ENCODE measurements at regions of chr7 and their contacts with region 1.

Region 1: DNA sequence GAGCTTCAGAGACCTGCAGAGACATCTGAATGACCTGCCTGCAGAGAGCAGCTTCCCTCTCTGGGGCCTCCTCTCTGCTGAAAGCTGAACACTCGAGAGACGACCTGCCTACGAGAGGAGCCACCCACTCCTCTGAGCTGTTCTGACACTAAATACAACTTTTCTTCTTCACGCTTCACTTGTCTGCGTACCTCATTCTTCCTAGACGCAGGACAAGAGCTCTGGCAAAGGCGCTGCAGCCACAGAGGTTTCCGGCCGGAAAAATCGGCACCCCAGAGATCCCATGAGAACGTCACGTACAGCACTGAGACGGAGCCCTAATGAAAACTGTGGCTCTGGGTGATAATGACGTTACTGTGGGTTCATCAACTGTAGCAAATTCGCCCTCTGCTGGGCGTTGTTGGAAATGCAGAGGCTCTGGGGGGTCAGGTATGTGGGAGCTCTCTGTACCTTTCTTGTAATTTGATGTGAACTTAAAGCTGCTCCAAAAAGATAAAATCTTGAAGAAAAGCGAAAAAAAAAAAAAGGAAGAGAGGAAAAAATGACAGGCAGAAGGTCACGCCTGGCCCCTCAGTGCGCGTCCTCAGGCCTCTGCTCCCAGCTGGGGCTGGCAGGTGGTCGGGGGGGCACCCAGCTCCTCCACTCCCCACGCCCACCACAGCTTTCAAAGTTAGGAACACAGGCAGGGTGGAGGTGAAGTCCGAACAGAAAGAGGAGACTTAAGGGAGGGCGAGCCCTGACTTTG is 120.7 kb downstream of the DYNC2I1 start:
- DNase-seq: peak; percentile 82 to 88 (median 85)
- H3K4me3 ChIP-seq: peak overlapping the region; percentile 63 to 71
- H3K4me3 Mint-ChIP-seq: peak overlapping the region; percentile 86 to 99 (median 90)
- H3K27ac ChIP-seq: peak overlapping the region; percentile 36
- H3K27ac Mint-ChIP-seq: peak overlapping the region; percentile 81 to 95 (median 90)
- H3K4me1 ChIP-seq: peaks cover 21% of the 10 kb centered on the region
- H3K4me1 Mint-ChIP-seq: peaks cover 11 to 24% (median 19%) of the 10 kb centered on the region in 4 donors
- H3K27me3 ChIP-seq: no peaks in the 10 kb centered on the region
- H3K27me3 Mint-ChIP-seq: no peaks in the 10 kb centered on the region

Region 2: DNA sequence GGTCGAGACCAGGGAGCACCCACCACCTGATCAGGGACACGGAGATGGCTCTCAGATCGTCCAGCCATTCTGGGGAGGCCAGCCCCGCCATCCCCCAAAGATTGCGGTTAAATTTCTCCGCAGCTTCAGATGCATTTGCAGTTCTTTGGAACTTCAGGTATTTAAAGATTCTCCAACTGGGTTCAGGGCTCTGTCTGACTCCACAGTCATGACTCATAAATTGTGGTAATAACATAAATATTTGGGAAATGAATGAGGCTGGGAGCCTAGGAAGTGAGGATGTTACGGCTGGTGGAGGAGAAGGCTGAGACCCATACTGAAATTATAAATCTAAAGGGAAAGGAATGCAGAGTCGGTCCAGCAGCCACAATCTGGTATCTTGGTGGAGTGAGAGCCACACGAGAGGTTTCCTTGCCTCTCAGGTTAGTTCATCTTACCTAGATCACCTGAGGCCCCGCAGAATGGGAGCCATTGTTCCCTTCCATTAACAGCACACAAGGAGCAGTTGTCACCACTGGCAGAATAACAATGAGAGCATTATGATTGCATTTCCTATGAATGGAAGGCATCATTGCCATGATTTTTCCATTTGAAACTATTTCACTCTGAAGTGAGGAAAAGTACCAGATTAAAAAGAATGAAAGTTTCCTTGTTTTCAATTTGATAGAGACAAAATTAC is 1666.9 kb before region 1 on chr7:
- CTCF ChIA-PET with region 1: no interaction called
- POLR2A ChIA-PET with region 1: no interaction called
- intact Hi-C with region 1: no loop called
- DNase-seq: no peak
- H3K4me3 ChIP-seq: no peak overlapping the region
- H3K4me3 Mint-ChIP-seq: no peak overlapping the region
- H3K27ac ChIP-seq: no peak overlapping the region
- H3K27ac Mint-ChIP-seq: peak overlapping the region in 1 of 7 donors; percentile 37
- H3K4me1 ChIP-seq: no peaks in the 10 kb centered on the region
- H3K4me1 Mint-ChIP-seq: peaks cover 5 to 6% (median 5%) of the 10 kb centered on the region in 4 donors
- H3K27me3 ChIP-seq: no peaks in the 10 kb centered on the region
- H3K27me3 Mint-ChIP-seq: no peaks in the 10 kb centered on the region

Region 3: DNA sequence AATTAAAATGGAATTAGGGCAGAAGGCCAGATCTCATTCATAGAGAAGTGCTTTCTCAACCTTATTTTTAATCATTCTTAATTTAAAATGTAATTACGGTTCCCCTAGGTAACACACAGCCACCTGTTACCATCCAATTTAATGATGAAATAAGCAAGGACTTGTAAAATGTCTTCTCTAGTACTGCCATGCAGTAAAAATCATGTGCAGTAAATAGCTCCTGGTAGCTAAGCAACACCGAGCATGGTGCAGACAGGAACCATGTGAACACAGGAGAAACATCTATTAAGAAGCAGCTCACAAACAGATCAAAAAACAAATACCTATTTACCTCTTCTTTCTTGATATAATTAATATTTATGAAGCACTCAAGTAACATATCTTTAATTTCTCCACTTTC is 287.5 kb before region 1 on chr7:
- CTCF ChIA-PET with region 1: interaction called, 154 read pairs
- POLR2A ChIA-PET with region 1: no interaction called
- intact Hi-C with region 1: no loop called
- DNase-seq: no peak
- H3K4me3 ChIP-seq: no peak overlapping the region
- H3K4me3 Mint-ChIP-seq: no peak overlapping the region
- H3K27ac ChIP-seq: no peak overlapping the region
- H3K27ac Mint-ChIP-seq: no peak overlapping the region
- H3K4me1 ChIP-seq: no peaks in the 10 kb centered on the region
- H3K4me1 Mint-ChIP-seq: peaks cover 0 to 4% (median 0%) of the 10 kb centered on the region in 4 donors
- H3K27me3 ChIP-seq: no peaks in the 10 kb centered on the region
- H3K27me3 Mint-ChIP-seq: no peaks in the 10 kb centered on the region

Region 4: GRCh38 chr7:158704704-158705468 is 272.1 kb before region 1 on chr7 and contains the start of gene NCAPG2:
- CTCF ChIA-PET with region 1: interaction called, 11 read pairs
- POLR2A ChIA-PET with region 1: interaction called, 9 read pairs
- intact Hi-C with region 1: loop called (anchors 2 kb)
- DNase-seq: peak; percentile 95 to 97 (median 97)
- H3K4me3 ChIP-seq: peak within 1 kb of the TSS; percentile 81 to 88
- H3K4me3 Mint-ChIP-seq: peak within 1 kb of the TSS; percentile 78 to 94 (median 83)
- H3K27ac ChIP-seq: peak within 1 kb of the TSS; percentile 64
- H3K27ac Mint-ChIP-seq: peak within 1 kb of the TSS; percentile 74 to 87 (median 80)
- H3K4me1 ChIP-seq: peaks cover 34% of the 10 kb centered on the region
- H3K4me1 Mint-ChIP-seq: peaks cover 17 to 32% (median 25%) of the 10 kb centered on the region in 4 donors
- H3K27me3 ChIP-seq: no peaks in the 10 kb centered on the region
- H3K27me3 Mint-ChIP-seq: no peaks in the 10 kb centered on the region
- total RNA-seq, gene NCAPG2: 15.0 to 17.9 TPM

Region 5: GRCh38 chr7:158782761-158783401 is 194.1 kb before region 1 on chr7:
- CTCF ChIA-PET with region 1: interaction called, 11 read pairs
- POLR2A ChIA-PET with region 1: interaction called, 4 read pairs
- intact Hi-C with region 1: loop called (anchors 2 kb)
- DNase-seq: peak in 2 of 5 donors; percentile 13 to 42
- H3K4me3 ChIP-seq: no peak overlapping the region
- H3K4me3 Mint-ChIP-seq: no peak overlapping the region
- H3K27ac ChIP-seq: no peak overlapping the region
- H3K27ac Mint-ChIP-seq: no peak overlapping the region
- H3K4me1 ChIP-seq: peaks cover 27% of the 10 kb centered on the region
- H3K4me1 Mint-ChIP-seq: peaks cover 3 to 23% (median 14%) of the 10 kb centered on the region in 4 donors
- H3K27me3 ChIP-seq: no peaks in the 10 kb centered on the region
- H3K27me3 Mint-ChIP-seq: no peaks in the 10 kb centered on the region

Region 6: GRCh38 chr7:158917818-158918217 is 59.2 kb before region 1 on chr7:
- CTCF ChIA-PET with region 1: no interaction called
- POLR2A ChIA-PET with region 1: no interaction called
- intact Hi-C with region 1: no loop called
- DNase-seq: no peak
- H3K4me3 ChIP-seq: no peak overlapping the region
- H3K4me3 Mint-ChIP-seq: no peak overlapping the region
- H3K27ac ChIP-seq: no peak overlapping the region
- H3K27ac Mint-ChIP-seq: no peak overlapping the region
- H3K4me1 ChIP-seq: no peaks in the 10 kb centered on the region
- H3K4me1 Mint-ChIP-seq: no peaks in the 10 kb centered on the region
- H3K27me3 ChIP-seq: no peaks in the 10 kb centered on the region
- H3K27me3 Mint-ChIP-seq: no peaks in the 10 kb centered on the region

Region 7: DNA sequence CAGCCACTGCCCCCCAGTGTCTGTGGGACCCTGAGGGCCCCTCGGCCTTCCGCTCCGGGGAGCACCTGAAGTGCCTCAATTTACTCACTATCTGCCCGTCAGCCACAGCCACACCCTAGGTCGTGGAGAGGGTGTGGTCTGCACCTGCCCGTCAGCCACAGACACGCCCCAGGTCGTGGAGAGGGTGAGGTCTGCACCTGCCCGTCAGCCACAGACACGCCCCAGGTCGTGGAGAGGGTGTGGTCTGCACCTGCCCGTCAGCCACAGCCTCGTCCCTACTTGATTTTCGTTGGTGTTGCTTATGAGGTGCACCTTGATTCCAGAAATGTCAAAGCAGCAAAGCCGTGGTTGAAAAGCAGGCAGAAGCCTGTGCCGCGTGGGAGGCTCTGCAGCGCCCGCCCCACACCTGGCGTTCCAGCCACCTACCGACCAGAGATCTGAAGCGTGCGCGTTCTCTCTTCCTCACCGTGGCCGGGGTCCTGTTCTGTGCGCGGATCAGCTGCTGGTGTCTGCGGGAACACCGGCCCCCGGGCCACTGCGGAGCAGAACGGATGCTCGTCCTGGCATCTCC is 19.0 kb before region 1 on chr7:
- CTCF ChIA-PET with region 1: interaction called, 13 read pairs
- POLR2A ChIA-PET with region 1: no interaction called
- intact Hi-C with region 1: no loop called
- DNase-seq: peak; percentile 33 to 60 (median 52)
- H3K4me3 ChIP-seq: peak overlapping the region; percentile 47 to 81
- H3K4me3 Mint-ChIP-seq: peak overlapping the region; percentile 77 to 89 (median 86)
- H3K27ac ChIP-seq: no peak overlapping the region
- H3K27ac Mint-ChIP-seq: peak overlapping the region in 5 of 7 donors; percentile 10 to 54 (median 39)
- H3K4me1 ChIP-seq: peaks cover 17% of the 10 kb centered on the region
- H3K4me1 Mint-ChIP-seq: peaks cover 6 to 13% (median 11%) of the 10 kb centered on the region in 4 donors
- H3K27me3 ChIP-seq: no peaks in the 10 kb centered on the region
- H3K27me3 Mint-ChIP-seq: peaks cover 0 to 2% of the 10 kb centered on the region in 2 donors

Region 8: GRCh38 chr7:158991824-158992583 is 15.0 kb after region 1 on chr7:
- CTCF ChIA-PET with region 1: interaction called, 12 read pairs
- POLR2A ChIA-PET with region 1: no interaction called
- intact Hi-C with region 1: no loop called
- DNase-seq: peak in 1 of 5 donors; percentile 58
- H3K4me3 ChIP-seq: no peak overlapping the region
- H3K4me3 Mint-ChIP-seq: peak overlapping the region in 1 of 8 donors; percentile 25
- H3K27ac ChIP-seq: no peak overlapping the region
- H3K27ac Mint-ChIP-seq: no peak overlapping the region
- H3K4me1 ChIP-seq: no peaks in the 10 kb centered on the region
- H3K4me1 Mint-ChIP-seq: peaks cover 7 to 17% (median 8%) of the 10 kb centered on the region in 4 donors
- H3K27me3 ChIP-seq: peaks cover 5% of the 10 kb centered on the region
- H3K27me3 Mint-ChIP-seq: peaks cover 21 to 46% of the 10 kb centered on the region in 2 donors

Region 9: GRCh38 chr7:159227433-159227832 is 250.4 kb after region 1 on chr7:
- CTCF ChIA-PET with region 1: no interaction called
- POLR2A ChIA-PET with region 1: no interaction called
- intact Hi-C with region 1: no loop called
- DNase-seq: no peak
- H3K4me3 ChIP-seq: no peak overlapping the region
- H3K4me3 Mint-ChIP-seq: no peak overlapping the region
- H3K27ac ChIP-seq: no peak overlapping the region
- H3K27ac Mint-ChIP-seq: no peak overlapping the region
- H3K4me1 ChIP-seq: no peaks in the 10 kb centered on the region
- H3K4me1 Mint-ChIP-seq: no peaks in the 10 kb centered on the region
- H3K27me3 ChIP-seq: no peaks in the 10 kb centered on the region
- H3K27me3 Mint-ChIP-seq: no peaks in the 10 kb centered on the region

Measured in CD4-positive, alpha-beta memory T cell (primary cell).